ENCODE measurements at regions of chr16 and their contacts with region 1.

Region 1: DNA sequence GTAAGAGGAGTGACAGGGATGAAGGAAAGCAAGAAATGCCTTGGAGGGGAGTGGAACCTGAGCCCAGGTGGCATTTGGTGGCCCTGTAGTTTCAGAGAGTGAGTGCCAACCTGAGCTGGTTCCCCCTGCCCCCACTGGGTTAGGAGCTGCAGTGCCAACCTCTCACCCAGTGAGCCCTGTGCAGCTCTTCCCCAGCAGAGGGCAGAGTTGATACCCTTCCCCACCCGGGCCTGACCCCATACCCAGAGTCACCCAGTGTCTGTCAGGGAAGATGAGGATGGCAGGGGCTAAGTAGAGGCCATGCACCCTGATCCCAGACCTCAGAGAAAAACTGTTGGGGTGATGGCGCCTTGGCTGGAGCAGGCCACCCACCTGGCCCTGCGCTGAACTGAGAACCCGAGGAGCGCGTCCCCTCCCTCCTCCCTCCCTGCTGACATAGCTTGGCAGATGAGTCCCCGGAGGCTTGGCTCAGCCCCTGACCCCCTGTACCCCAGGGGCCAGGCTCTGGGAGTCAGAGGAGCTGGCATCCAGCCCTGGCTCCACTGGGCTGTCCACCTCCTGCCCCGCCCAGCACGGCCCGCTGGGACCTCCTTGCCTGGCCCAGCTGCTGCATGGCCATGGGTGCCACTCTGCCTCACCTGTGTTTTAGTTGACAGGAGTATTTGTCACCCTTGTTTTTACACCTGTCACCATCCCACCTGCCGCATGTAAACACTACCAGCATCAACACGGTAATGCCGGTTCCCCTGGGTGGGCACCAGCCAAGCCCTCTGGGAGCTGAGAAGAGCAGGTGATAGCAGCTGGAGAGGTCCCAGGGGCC is 113.9 kb downstream of the AMFR start:
- DNase-seq: no peak
- ATAC-seq: peak; percentile 72
- H3K4me3 ChIP-seq: no peak overlapping the region
- H3K27ac ChIP-seq: no peak overlapping the region
- H3K4me1 ChIP-seq: no peaks in the 10 kb centered on the region
- H3K27me3 ChIP-seq: peaks cover 0 to 20% of the 10 kb centered on the region in 2 experiments; a peak in 3 of 5 replicates
- CTCF ChIP-seq: peak; percentile 56
- EP300 ChIP-seq: no peak
- POLR2A ChIP-seq: no peak
- RAD21 ChIP-seq: no peak

Region 2: GRCh38 chr16:55949518-55949917 is 361.9 kb before region 1 on chr16:
- CTCF ChIA-PET with region 1: no interaction called
- POLR2A ChIA-PET with region 1: no interaction called
- in situ Hi-C with region 1: loop called (anchors 5 kb)
- intact Hi-C with region 1: no loop called
- DNase-seq: no peak
- ATAC-seq: no peak
- H3K4me3 ChIP-seq: no peak overlapping the region
- H3K27ac ChIP-seq: no peak overlapping the region
- H3K4me1 ChIP-seq: no peaks in the 10 kb centered on the region
- H3K27me3 ChIP-seq: no peaks in the 10 kb centered on the region; a peak in 2 of 5 replicates
- CTCF ChIP-seq: no peak
- EP300 ChIP-seq: no peak
- POLR2A ChIP-seq: no peak
- RAD21 ChIP-seq: no peak

Region 3: GRCh38 chr16:56211435-56211981 is 99.9 kb before region 1 on chr16:
- CTCF ChIA-PET with region 1: no interaction called
- POLR2A ChIA-PET with region 1: no interaction called
- in situ Hi-C with region 1: no loop called
- intact Hi-C with region 1: no loop called
- DNase-seq: no peak
- ATAC-seq: no peak
- H3K4me3 ChIP-seq: no peak overlapping the region
- H3K27ac ChIP-seq: no peak overlapping the region
- H3K4me1 ChIP-seq: no peaks in the 10 kb centered on the region
- H3K27me3 ChIP-seq: peaks cover 0 to 15% of the 10 kb centered on the region in 2 experiments; a peak in 1 of 5 replicates
- CTCF ChIP-seq: no peak
- EP300 ChIP-seq: no peak
- POLR2A ChIP-seq: no peak
- RAD21 ChIP-seq: no peak

Region 4: GRCh38 chr16:56382901-56383355 is 71.5 kb after region 1 on chr16:
- CTCF ChIA-PET with region 1: no interaction called
- POLR2A ChIA-PET with region 1: no interaction called
- in situ Hi-C with region 1: no loop called
- intact Hi-C with region 1: no loop called
- DNase-seq: peak; percentile 56
- ATAC-seq: peak; percentile 79
- H3K4me3 ChIP-seq: no peak overlapping the region
- H3K27ac ChIP-seq: peak overlapping the region; percentile 38
- H3K4me1 ChIP-seq: peaks cover 29% of the 10 kb centered on the region
- H3K27me3 ChIP-seq: no peaks in the 10 kb centered on the region
- CTCF ChIP-seq: no peak
- EP300 ChIP-seq: no peak
- POLR2A ChIP-seq: no peak
- RAD21 ChIP-seq: no peak

Region 5: GRCh38 chr16:57115514-57116182 is 804.2 kb after region 1 on chr16:
- CTCF ChIA-PET with region 1: no interaction called
- POLR2A ChIA-PET with region 1: no interaction called
- in situ Hi-C with region 1: no loop called
- intact Hi-C with region 1: no loop called
- DNase-seq: no peak
- ATAC-seq: no peak
- H3K4me3 ChIP-seq: no peak overlapping the region
- H3K27ac ChIP-seq: no peak overlapping the region
- H3K4me1 ChIP-seq: no peaks in the 10 kb centered on the region
- H3K27me3 ChIP-seq: no peaks in the 10 kb centered on the region
- CTCF ChIP-seq: no peak
- EP300 ChIP-seq: no peak
- POLR2A ChIP-seq: no peak
- RAD21 ChIP-seq: no peak

Measured in HepG2 (cell line).